ENCODE measurements at regions of chr6 and their contacts with region 1.

Region 1: DNA sequence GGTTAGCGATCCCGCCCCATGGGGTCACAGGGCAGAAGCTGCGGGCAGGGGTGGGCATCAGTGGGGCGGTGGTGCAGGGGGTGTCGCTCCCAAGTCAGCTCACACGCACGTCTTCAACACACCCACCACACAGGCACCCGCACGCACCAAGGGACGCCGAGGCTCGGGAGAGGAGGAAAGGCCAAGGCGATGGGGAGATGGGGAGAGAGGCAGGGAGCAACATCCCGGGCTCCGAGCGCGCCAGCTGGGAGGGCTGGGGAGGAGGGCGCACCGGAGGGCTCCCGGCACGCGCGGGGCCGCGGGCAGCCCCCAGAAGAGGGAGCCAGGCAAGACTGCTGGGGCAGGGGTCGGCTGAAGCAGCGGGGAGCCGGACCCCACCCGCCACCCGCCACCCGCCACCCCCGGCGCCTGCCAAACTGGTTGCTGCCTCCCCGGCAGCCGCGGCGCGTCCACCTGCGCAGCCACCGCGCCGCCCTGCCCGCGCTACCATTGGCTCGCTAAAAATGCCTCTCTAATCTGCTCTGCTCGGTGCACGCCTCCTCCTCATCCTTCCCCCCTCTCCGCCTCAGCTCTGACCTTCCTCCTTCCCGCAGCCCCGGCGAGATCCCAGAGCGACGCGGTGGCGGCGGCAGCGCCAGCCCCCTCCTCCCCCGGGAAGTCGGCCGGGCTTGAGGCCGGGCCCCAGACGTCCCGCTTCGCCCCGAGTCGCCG is at the start of gene PACSIN1:
- DNase-seq: peak; percentile 84 to 90 (median 87)
- ATAC-seq: peak; percentile 93
- H3K4me3 ChIP-seq: peak within 1 kb of the TSS; percentile 45
- H3K27ac ChIP-seq: no peak within 1 kb of the TSS
- H3K4me1 ChIP-seq: peaks cover 9 to 21% of the 10 kb centered on the region in 2 experiments; a peak in 4 of 5 replicates
- H3K27me3 ChIP-seq: no peaks in the 10 kb centered on the region
- CTCF ChIP-seq: no peak
- EP300 ChIP-seq: no peak
- POLR2A ChIP-seq: no peak
- RAD21 ChIP-seq: no peak
- polyA plus RNA-seq, gene PACSIN1: 0.01 to 0.03 TPM

Region 2: DNA sequence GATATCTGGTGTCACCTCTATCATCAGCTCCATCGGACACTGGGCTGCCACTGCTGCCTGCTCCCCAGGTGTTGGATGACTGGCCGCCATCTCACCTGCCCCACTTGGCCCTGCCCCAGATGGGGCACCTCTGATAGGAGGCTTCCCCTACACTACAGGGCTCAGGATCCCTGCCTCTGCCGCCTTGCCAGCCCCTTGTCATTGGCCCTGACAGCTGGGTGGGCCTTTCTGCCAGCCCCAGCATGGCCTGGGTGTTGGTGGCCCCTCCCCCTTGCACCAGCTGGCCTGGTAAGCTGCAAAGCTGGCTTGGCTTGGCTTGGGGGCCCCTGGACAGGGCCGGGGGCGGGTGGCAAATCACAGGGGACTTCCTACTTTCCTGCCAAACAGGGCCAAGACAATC is 10.8 kb after region 1 on chr6:
- CTCF ChIA-PET with region 1: no interaction called
- POLR2A ChIA-PET with region 1: interaction called, 10 read pairs
- in situ Hi-C with region 1: no loop called
- intact Hi-C with region 1: no loop called
- DNase-seq: no peak
- ATAC-seq: no peak
- H3K4me3 ChIP-seq: no peak overlapping the region
- H3K27ac ChIP-seq: no peak overlapping the region
- H3K4me1 ChIP-seq: peaks cover 0 to 4% of the 10 kb centered on the region in 2 experiments; a peak in 4 of 5 replicates
- H3K27me3 ChIP-seq: no peaks in the 10 kb centered on the region
- CTCF ChIP-seq: no peak
- EP300 ChIP-seq: no peak
- POLR2A ChIP-seq: no peak
- RAD21 ChIP-seq: no peak